Dendritic cell treated with granulocyte-macrophage colony-stimulating factor and Interleukin-4, amounts not matched to agents 40 ng/mL and 50 ng/mL, for 4 days (primary cell): ENCODE measurements at regions of chr9 and their contacts with region 1.

Region 1: GRCh38 chr9:130682490-130683121 is 11.0 kb upstream of the EXOSC2 start:
- H3K4me3 Mint-ChIP-seq: peak overlapping the region; percentile 78
- H3K27ac Mint-ChIP-seq: no peak overlapping the region
- H3K4me1 Mint-ChIP-seq: peaks cover 9% of the 10 kb centered on the region
- H3K27me3 Mint-ChIP-seq: peaks cover 56% of the 10 kb centered on the region

Region 2: GRCh38 chr9:130461218-130461630 is 221.4 kb before region 1 on chr9:
- intact Hi-C with region 1: loop called (anchors 1 kb)
- H3K4me3 Mint-ChIP-seq: no peak overlapping the region
- H3K27ac Mint-ChIP-seq: no peak overlapping the region
- H3K4me1 Mint-ChIP-seq: no peaks in the 10 kb centered on the region
- H3K27me3 Mint-ChIP-seq: peaks cover 32% of the 10 kb centered on the region

Region 3: DNA sequence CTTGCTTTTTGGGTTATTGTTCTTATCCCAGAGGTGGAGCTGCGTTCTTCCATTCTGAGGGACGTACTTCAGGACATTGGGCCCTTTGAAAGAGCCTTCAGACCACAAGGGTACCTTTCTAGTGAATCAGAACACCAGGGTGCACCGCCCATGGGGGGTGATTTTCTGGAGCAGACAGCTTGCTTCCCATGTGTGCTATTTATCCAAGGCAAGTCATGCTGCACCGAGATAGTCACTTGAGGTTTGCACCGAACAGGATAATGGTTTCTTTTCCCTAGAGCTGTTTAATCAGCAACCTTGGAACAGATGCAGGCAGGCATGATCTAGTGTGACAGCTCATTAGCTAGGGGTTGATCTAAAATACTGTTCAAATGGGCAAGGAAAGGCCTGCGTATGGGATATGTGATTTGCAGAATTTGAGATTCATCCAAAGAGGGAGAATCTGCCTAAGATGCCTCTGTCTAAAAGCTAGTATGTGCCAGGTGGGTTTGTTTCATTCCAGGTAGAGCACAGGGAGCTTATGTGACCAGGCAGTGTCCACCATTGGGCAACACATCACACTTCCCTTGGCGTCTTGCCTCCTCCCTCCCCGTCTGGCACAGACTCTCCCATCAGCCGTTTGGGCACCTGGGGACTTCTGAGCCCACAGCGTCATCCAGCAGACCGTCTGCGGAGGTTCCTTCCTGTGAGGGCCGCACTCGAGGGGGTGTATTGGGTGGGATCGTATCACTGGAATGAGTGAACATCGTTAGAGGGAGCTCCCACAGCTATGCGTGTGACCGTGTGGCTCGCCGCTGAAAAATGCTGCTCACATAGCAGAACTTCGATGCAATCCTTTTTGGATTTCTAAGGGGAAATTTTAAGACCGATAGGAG is 175.5 kb after region 1 on chr9:
- intact Hi-C with region 1: no loop called
- H3K4me3 Mint-ChIP-seq: no peak overlapping the region
- H3K27ac Mint-ChIP-seq: no peak overlapping the region
- H3K4me1 Mint-ChIP-seq: no peaks in the 10 kb centered on the region
- H3K27me3 Mint-ChIP-seq: no peaks in the 10 kb centered on the region

Region 4: GRCh38 chr9:131807144-131807983 is 1124.8 kb after region 1 on chr9:
- intact Hi-C with region 1: no loop called
- H3K4me3 Mint-ChIP-seq: no peak overlapping the region
- H3K27ac Mint-ChIP-seq: no peak overlapping the region
- H3K4me1 Mint-ChIP-seq: no peaks in the 10 kb centered on the region
- H3K27me3 Mint-ChIP-seq: peaks cover 27% of the 10 kb centered on the region